ENCODE measurements at regions of chr1 and their contacts with region 1.

Region 1: GRCh38 chr1:48422009-48422408 is 50.0 kb downstream of the SPATA6 start:
- DNase-seq: no peak
- H3K4me3 ChIP-seq: no peak overlapping the region
- H3K27ac ChIP-seq: no peak overlapping the region
- H3K4me1 ChIP-seq: no peaks in the 10 kb centered on the region
- H3K27me3 ChIP-seq: no peaks in the 10 kb centered on the region
- CTCF ChIP-seq: no peak
- EP300 ChIP-seq: no peak
- POLR2A ChIP-seq: no peak

Region 2: GRCh38 chr1:48251323-48251722 is 170.7 kb before region 1 on chr1:
- intact Hi-C with region 1: no loop called
- DNase-seq: no peak
- H3K4me3 ChIP-seq: no peak overlapping the region
- H3K27ac ChIP-seq: no peak overlapping the region
- H3K4me1 ChIP-seq: no peaks in the 10 kb centered on the region
- H3K27me3 ChIP-seq: no peaks in the 10 kb centered on the region
- CTCF ChIP-seq: no peak
- EP300 ChIP-seq: no peak
- POLR2A ChIP-seq: no peak

Region 3: DNA sequence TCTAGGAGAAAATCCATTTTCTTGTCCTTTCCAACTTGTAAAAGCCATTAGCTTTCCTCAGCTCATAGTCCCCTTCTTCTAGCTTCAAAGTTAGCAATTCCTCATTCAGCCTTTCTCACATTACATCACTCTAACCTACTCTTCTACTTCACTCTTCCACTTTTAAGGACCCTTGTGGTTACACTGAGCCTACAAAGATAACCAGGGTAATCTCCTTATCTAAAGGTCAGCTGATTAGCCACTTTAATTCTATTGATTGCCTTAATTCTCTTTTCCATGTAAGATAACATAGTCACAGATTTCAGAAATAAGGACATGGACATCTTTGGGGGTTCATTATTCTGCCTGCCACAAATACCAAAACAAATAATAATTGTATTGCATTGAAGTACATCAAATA is 58.5 kb after region 1 on chr1:
- intact Hi-C with region 1: loop called in 1 of 4 experiments (anchors 5 kb)
- DNase-seq: no peak
- H3K4me3 ChIP-seq: no peak overlapping the region
- H3K27ac ChIP-seq: no peak overlapping the region
- H3K4me1 ChIP-seq: no peaks in the 10 kb centered on the region
- H3K27me3 ChIP-seq: no peaks in the 10 kb centered on the region
- CTCF ChIP-seq: no peak
- EP300 ChIP-seq: no peak
- POLR2A ChIP-seq: no peak